Left lung (tissue), 14 donors: ENCODE measurements at regions of chr6 and their contacts with region 1.

Region 1: GRCh38 chr6:7615611-7616383 is 25.8 kb downstream of the SNRNP48 start:
- DNase-seq: peak in 2 of 4 donors; percentile 47 to 66
- ATAC-seq: peak; percentile 82
- H3K4me3 ChIP-seq: no peak overlapping the region
- H3K27ac ChIP-seq: no peak overlapping the region
- H3K4me1 ChIP-seq: peaks cover 3 to 27% of the 10 kb centered on the region in 2 donors
- H3K27me3 ChIP-seq: no peaks in the 10 kb centered on the region
- CTCF ChIP-seq: peak; percentile 60 to 69

Region 2: GRCh38 chr6:7270320-7271204 is 345.2 kb before region 1 on chr6:
- intact Hi-C with region 1: loop called in 1 of 2 experiments (anchors 10 kb)
- DNase-seq: peak in 2 of 4 donors; percentile 4 to 82
- ATAC-seq: no peak
- H3K4me3 ChIP-seq: no peak overlapping the region
- H3K27ac ChIP-seq: no peak overlapping the region
- H3K4me1 ChIP-seq: peaks cover 0 to 25% of the 10 kb centered on the region in 2 donors
- H3K27me3 ChIP-seq: no peaks in the 10 kb centered on the region
- CTCF ChIP-seq: no peak

Region 3: DNA sequence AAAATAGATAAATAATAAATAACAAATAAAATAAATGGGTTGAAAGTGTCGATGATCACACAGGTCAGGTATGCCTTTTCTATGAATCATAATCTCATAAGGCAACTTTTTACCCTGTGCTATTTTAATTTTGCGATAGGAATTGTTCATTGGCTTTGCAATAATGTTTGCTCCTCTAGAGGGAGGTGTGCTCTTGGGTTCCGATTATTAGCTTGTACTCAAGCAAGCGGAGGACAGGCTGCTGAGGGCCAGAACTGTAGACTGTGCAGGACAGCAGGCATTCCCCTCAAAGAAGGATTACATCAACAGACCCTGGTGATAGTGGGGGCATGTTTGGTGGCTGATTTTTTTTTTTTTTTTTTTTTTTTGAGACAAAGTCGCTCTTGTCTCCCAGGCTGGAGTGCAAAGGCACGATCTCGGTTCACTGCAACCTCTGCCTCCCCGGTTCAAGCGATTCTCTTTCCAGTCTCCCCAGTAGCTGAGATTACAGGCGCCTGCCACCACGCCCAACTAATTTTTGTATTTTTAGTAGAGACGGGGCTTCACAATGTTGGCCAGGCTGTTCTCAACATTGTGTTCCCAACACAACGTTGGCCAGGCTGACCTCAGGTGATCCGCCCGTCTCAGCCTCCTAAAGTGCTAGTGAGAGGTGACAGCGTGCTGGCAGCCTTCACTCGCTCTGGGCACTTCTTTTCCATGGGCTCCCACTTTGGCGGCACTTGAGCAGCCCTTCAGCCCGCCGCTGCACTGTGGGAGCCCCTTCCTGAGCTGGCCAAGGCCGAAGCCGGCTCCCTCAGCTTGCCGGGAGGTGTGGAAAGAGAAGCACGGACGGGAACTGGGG is 190.6 kb before region 1 on chr6:
- intact Hi-C with region 1: loop called in 1 of 2 experiments (anchors 10 kb)
- DNase-seq: peak in 1 of 4 donors; percentile 33
- ATAC-seq: peak; percentile 94
- H3K4me3 ChIP-seq: no peak overlapping the region
- H3K27ac ChIP-seq: no peak overlapping the region
- H3K4me1 ChIP-seq: no peaks in the 10 kb centered on the region
- H3K27me3 ChIP-seq: no peaks in the 10 kb centered on the region
- CTCF ChIP-seq: peak; percentile 37 to 41

Region 4: GRCh38 chr6:7992002-7992815 is 376.4 kb after region 1 on chr6:
- intact Hi-C with region 1: no loop called
- DNase-seq: peak in 2 of 4 donors; percentile 39 to 76
- ATAC-seq: peak; percentile 72
- H3K4me3 ChIP-seq: no peak overlapping the region
- H3K27ac ChIP-seq: peak overlapping the region in 1 of 2 donors; percentile 40
- H3K4me1 ChIP-seq: no peaks in the 10 kb centered on the region
- H3K27me3 ChIP-seq: no peaks in the 10 kb centered on the region
- CTCF ChIP-seq: peak; percentile 21 to 36